CD4-positive, alpha-beta T cell (primary cell): ENCODE measurements at regions of chr15 and their contacts with region 1.

Region 1: GRCh38 chr15:45166834-45167630 is 20.7 kb downstream of the SHF start:
- DNase-seq: peak; percentile 69 to 91 (median 78)
- ATAC-seq: peak; percentile 90
- H3K4me3 ChIP-seq: peak overlapping the region; percentile 78
- H3K4me3 Mint-ChIP-seq: peak overlapping the region; percentile 85
- H3K27ac ChIP-seq: peak overlapping the region; percentile 73 to 83
- H3K27ac Mint-ChIP-seq: peak overlapping the region; percentile 89
- H3K4me1 ChIP-seq: peaks cover 29% of the 10 kb centered on the region
- H3K4me1 Mint-ChIP-seq: peaks cover 15% of the 10 kb centered on the region
- H3K27me3 ChIP-seq: no peaks in the 10 kb centered on the region
- H3K27me3 Mint-ChIP-seq: no peaks in the 10 kb centered on the region
- CTCF ChIP-seq: peak; percentile 65

Region 2: DNA sequence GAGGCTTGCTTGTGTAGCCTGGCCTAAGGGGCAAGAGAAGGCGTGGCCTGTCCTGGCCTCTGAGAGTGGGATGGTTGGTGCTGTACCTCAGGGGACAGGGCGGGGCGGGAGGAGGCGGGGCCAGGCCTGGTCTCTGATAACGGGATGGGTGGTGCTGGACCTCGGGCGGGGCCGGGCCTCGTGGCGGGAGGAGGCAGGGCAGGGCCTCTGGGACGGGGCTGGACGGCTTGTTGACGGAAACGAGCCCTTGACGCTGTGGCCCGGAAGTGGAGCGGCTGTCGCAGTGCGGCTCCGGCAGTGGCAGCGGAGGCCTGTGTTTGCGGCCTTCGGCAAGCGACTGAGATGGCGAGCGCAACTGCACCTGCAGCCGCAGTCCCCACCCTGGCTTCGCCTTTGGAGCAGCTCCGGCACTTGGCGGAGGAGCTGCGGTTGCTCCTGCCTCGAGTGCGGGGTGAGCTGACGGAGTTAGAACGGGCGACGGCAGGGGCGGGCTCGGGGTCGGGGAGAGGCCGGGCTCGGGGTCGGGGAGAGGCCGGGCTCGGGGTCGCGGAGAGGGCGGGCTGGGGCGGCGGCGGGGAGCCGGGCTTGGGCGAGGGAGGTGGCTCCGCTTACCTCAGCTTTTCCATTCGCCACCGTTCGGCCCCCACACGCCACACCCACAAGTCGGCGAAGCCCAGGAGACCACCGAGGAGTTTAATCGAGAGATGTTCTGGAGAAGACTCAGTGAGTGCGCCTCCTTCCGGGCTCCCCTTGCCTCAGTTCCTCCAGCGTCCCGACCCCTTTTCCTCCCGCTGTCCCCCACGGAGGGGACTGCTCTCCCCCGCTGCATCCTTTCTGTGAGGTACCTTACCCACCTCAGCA is 1981.6 kb before region 1 on chr15 and contains the start of gene CCNDBP1:
- CTCF ChIA-PET with region 1: no interaction called
- POLR2A ChIA-PET with region 1: no interaction called
- intact Hi-C with region 1: loop called in 1 of 2 experiments (anchors 5 kb)
- DNase-seq: peak; percentile 71 to 96 (median 84)
- ATAC-seq: peak; percentile 77
- H3K4me3 ChIP-seq: peak within 1 kb of the TSS; percentile 71
- H3K4me3 Mint-ChIP-seq: peak within 1 kb of the TSS; percentile 96
- H3K27ac ChIP-seq: peak within 1 kb of the TSS; percentile 89 to 91
- H3K27ac Mint-ChIP-seq: peak within 1 kb of the TSS; percentile 98
- H3K4me1 ChIP-seq: peaks cover 23% of the 10 kb centered on the region
- H3K4me1 Mint-ChIP-seq: peaks cover 43% of the 10 kb centered on the region
- H3K27me3 ChIP-seq: no peaks in the 10 kb centered on the region
- H3K27me3 Mint-ChIP-seq: no peaks in the 10 kb centered on the region
- CTCF ChIP-seq: peak; percentile 47
- total RNA-seq, gene CCNDBP1: 92.3 to 103 TPM

Region 3: GRCh38 chr15:43312378-43312777 is 1854.7 kb before region 1 on chr15:
- CTCF ChIA-PET with region 1: no interaction called
- POLR2A ChIA-PET with region 1: no interaction called
- intact Hi-C with region 1: no loop called
- DNase-seq: no peak
- ATAC-seq: no peak
- H3K4me3 ChIP-seq: no peak overlapping the region
- H3K4me3 Mint-ChIP-seq: no peak overlapping the region
- H3K27ac ChIP-seq: no peak overlapping the region
- H3K27ac Mint-ChIP-seq: no peak overlapping the region
- H3K4me1 ChIP-seq: no peaks in the 10 kb centered on the region
- H3K4me1 Mint-ChIP-seq: no peaks in the 10 kb centered on the region
- H3K27me3 ChIP-seq: peaks cover 5 to 27% of the 10 kb centered on the region in 2 experiments
- H3K27me3 Mint-ChIP-seq: peaks cover 68% of the 10 kb centered on the region
- CTCF ChIP-seq: no peak

Region 4: GRCh38 chr15:45126535-45127158 is 40.4 kb before region 1 on chr15:
- CTCF ChIA-PET with region 1: no interaction called
- POLR2A ChIA-PET with region 1: no interaction called
- intact Hi-C with region 1: loop called in 1 of 2 experiments (anchors 5 kb)
- DNase-seq: peak in 10 of 14 experiments; percentile 26 to 71 (median 38)
- ATAC-seq: peak; percentile 69
- H3K4me3 ChIP-seq: no peak overlapping the region
- H3K4me3 Mint-ChIP-seq: no peak overlapping the region
- H3K27ac ChIP-seq: no peak overlapping the region
- H3K27ac Mint-ChIP-seq: no peak overlapping the region
- H3K4me1 ChIP-seq: peaks cover 14% of the 10 kb centered on the region
- H3K4me1 Mint-ChIP-seq: peaks cover 7% of the 10 kb centered on the region
- H3K27me3 ChIP-seq: peaks cover 47 to 60% of the 10 kb centered on the region in 2 experiments
- H3K27me3 Mint-ChIP-seq: peaks cover 72% of the 10 kb centered on the region
- CTCF ChIP-seq: peak; percentile 80

Region 5: DNA sequence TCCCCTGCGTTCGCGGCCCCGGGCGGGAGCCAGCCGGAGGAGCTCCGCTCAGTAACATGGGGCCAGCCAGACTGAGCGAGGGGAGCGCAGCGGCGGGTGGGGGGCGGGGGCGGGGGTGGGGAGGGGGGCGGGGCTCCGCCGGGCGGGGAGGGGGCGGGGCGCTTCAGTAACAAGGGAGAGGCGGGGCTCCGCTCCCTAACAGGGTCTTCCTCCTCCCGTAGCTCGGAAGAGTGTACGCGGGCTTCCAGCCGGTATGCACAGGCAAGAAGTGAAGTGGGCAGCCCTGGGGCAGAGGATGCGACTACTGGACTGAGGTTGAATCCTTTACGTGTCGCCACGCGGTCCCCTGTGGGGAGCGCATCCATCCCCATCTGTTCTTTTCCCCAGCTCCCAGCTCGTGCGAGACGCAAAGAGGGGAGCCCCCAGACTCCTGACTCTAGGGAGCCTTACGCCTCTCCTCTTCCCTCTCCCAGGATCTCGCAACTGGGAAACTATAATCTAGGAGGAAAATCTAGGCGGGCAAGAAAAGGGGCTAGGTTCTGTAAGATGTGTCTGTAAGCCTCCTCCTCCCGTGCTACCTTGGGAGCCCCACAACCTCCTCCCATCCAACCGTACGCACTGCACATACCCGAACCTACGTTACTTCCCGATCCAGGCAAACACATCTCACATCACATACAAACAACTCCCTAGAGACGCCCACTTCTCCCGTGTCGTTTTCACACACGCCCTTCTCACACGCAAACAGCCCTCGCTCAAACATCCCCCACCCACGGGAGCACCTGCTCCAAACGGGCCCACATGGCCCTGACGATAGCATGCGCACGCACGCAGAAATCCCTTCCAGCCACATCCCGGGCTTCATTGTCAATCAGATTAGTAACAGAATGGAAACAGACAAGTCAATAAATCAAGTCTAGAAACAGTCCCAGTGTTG is 21.1 kb after region 1 on chr15 and contains the start of gene SHF:
- CTCF ChIA-PET with region 1: interaction called, 10 read pairs
- POLR2A ChIA-PET with region 1: interaction called, 6 read pairs
- intact Hi-C with region 1: no loop called
- DNase-seq: peak; percentile 30 to 87 (median 58)
- ATAC-seq: peak; percentile 71
- H3K4me3 ChIP-seq: peak within 1 kb of the TSS; percentile 68
- H3K4me3 Mint-ChIP-seq: peak within 1 kb of the TSS; percentile 92
- H3K27ac ChIP-seq: peak within 1 kb of the TSS in 1 of 2 donors; percentile 21
- H3K27ac Mint-ChIP-seq: peak within 1 kb of the TSS; percentile 72
- H3K4me1 ChIP-seq: peaks cover 24% of the 10 kb centered on the region
- H3K4me1 Mint-ChIP-seq: peaks cover 12% of the 10 kb centered on the region
- H3K27me3 ChIP-seq: no peaks in the 10 kb centered on the region
- H3K27me3 Mint-ChIP-seq: no peaks in the 10 kb centered on the region
- CTCF ChIP-seq: no peak
- total RNA-seq, gene SHF: 3.7 to 3.9 TPM

Region 6: DNA sequence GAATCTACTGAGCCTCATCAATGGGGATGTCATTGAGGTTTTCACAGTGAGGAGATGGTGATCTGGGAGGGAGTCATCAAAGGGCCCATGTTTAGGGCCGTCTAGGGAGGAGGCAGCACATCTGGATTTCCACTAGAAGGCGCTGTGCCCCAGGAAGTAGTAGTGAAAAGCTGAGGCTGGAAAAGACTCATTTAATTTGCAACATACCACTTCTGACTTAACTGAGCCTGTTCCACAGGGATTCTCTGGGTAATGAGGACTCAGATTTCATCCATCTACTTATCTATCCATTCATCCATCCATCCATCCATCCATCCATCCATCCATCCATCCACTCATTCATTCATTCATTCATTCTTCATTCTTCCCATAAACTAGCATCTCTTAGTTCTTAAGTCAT is 38.2 kb after region 1 on chr15:
- CTCF ChIA-PET with region 1: interaction called, 15 read pairs
- POLR2A ChIA-PET with region 1: interaction called, 53 read pairs
- intact Hi-C with region 1: loop called (anchors 1 kb)
- DNase-seq: peak in 12 of 14 experiments; percentile 26 to 82 (median 48)
- ATAC-seq: peak; percentile 9
- H3K4me3 ChIP-seq: no peak overlapping the region
- H3K4me3 Mint-ChIP-seq: peak overlapping the region; percentile 23
- H3K27ac ChIP-seq: no peak overlapping the region
- H3K27ac Mint-ChIP-seq: peak overlapping the region; percentile 37
- H3K4me1 ChIP-seq: peaks cover 18% of the 10 kb centered on the region
- H3K4me1 Mint-ChIP-seq: no peaks in the 10 kb centered on the region
- H3K27me3 ChIP-seq: no peaks in the 10 kb centered on the region
- H3K27me3 Mint-ChIP-seq: peaks cover 10% of the 10 kb centered on the region
- CTCF ChIP-seq: peak; percentile 48

Region 7: DNA sequence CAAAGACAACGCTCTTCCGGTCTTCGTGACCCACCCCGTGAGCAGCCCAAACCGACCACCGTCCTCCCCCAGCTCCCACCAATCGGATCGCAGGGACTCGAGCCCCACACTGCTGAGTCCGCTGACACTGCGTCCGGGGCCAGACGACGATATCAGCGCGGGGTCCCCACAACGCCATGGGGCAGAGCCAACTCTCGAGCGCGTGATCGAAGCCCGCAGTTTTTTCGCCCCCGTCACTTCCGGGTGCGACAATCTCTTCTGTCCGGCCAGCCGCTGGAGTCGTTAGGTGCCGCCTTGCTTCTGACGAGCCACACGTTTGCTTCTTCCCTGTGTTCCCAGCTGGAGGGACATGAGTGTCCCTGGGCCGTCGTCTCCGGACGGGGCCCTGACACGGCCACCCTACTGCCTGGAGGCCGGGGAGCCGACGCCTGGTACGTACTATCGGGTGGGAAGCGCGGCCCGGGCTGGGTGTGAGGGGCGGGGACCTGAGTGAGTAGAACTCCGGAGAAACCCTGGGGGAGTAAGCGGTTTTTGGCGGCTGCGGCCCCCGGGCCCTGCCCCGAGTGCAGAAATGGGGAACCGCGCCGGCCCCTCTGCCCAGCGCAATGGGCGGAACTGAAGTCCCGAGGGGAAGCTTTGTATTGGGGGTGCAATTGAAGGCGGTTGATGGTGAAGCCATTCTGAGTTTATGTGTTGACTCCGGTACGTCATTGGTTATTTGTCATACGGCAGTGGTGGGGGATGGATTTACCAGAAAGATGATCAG is 420.2 kb after region 1 on chr15 and contains the start of gene BLOC1S6:
- CTCF ChIA-PET with region 1: no interaction called
- POLR2A ChIA-PET with region 1: interaction called, 3 read pairs
- intact Hi-C with region 1: loop called in 1 of 2 experiments (anchors 10 kb)
- DNase-seq: peak; percentile 78 to 95 (median 85)
- ATAC-seq: peak; percentile 78
- H3K4me3 ChIP-seq: peak within 1 kb of the TSS; percentile 94
- H3K4me3 Mint-ChIP-seq: peak within 1 kb of the TSS; percentile 99
- H3K27ac ChIP-seq: peak within 1 kb of the TSS; percentile 95 to 99
- H3K27ac Mint-ChIP-seq: peak within 1 kb of the TSS; percentile 100
- H3K4me1 ChIP-seq: peaks cover 21% of the 10 kb centered on the region
- H3K4me1 Mint-ChIP-seq: peaks cover 43% of the 10 kb centered on the region
- H3K27me3 ChIP-seq: no peaks in the 10 kb centered on the region
- H3K27me3 Mint-ChIP-seq: no peaks in the 10 kb centered on the region
- CTCF ChIP-seq: no peak
- total RNA-seq, gene BLOC1S6: 68.5 TPM